Psoas muscle (tissue), 8 donors: ENCODE measurements at regions of chr5 and their contacts with region 1.

Region 1: GRCh38 chr5:133091034-133091433 is 39.2 kb downstream of the HSPA4 start:
- DNase-seq: no peak
- ATAC-seq: no peak
- H3K4me3 ChIP-seq: no peak overlapping the region
- H3K27ac ChIP-seq: no peak overlapping the region
- H3K4me1 ChIP-seq: no peaks in the 10 kb centered on the region
- H3K27me3 ChIP-seq: no peaks in the 10 kb centered on the region
- CTCF ChIP-seq: no peak

Region 2: DNA sequence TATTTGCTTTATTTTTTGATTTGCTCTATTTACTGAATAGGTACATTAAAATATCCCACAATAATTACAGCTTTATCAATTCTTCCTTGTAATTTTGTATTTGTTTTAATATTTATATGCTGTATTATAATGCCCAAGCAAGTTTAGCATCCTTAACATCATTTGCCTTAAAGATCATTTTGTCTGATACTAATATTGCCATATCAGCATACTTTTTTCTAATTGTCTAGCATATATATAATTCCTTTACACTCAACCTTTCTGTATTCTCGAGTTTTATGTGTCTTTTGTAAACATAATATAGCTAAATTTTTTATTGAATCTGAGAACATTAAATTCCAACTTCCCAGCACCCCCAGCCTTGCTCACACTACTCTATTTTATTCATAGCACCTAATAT is 928.1 kb before region 1 on chr5:
- intact Hi-C with region 1: loop called in 1 of 2 experiments (anchors 10 kb)
- DNase-seq: no peak
- ATAC-seq: no peak
- H3K4me3 ChIP-seq: no peak overlapping the region
- H3K27ac ChIP-seq: no peak overlapping the region
- H3K4me1 ChIP-seq: no peaks in the 10 kb centered on the region
- H3K27me3 ChIP-seq: no peaks in the 10 kb centered on the region
- CTCF ChIP-seq: no peak